Panc1 (cell line): ENCODE measurements at regions of chr2 and their contacts with region 1.

Region 1: DNA sequence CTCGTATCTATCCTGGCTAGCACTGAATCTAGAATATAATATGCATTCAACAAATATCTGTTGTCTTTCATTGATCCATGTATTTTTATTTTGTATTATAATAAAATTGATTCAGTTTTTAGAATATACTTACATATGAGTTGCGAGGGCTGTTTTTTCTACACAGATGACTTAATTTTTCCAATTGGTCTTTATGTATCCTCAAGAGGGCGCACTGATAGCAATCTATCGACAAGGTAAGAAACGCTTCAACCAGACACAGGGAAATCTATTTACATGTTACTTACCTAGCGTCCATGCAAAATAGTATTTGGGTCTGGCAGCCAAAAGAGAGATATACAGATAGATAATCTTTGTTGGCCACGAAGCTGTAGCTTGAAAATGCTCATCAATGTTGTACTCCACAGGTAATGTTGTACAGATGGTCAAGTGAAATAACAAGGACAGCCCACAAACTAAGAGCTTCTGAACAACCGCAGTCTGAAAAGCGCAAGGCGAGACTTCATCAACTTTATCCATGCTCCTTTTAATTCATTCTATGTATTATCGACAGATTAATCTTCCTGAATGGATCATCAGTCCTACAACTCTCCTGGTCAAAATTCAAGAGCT is 35.5 kb upstream of the KIDINS220 start:
- DNase-seq: peak; percentile 43
- ATAC-seq: peak; percentile 69
- H3K4me3 ChIP-seq: no peak overlapping the region
- H3K27ac ChIP-seq: no peak overlapping the region
- H3K4me1 ChIP-seq: no peaks in the 10 kb centered on the region
- H3K27me3 ChIP-seq: no peaks in the 10 kb centered on the region
- CTCF ChIP-seq: peak; percentile 75

Region 2: DNA sequence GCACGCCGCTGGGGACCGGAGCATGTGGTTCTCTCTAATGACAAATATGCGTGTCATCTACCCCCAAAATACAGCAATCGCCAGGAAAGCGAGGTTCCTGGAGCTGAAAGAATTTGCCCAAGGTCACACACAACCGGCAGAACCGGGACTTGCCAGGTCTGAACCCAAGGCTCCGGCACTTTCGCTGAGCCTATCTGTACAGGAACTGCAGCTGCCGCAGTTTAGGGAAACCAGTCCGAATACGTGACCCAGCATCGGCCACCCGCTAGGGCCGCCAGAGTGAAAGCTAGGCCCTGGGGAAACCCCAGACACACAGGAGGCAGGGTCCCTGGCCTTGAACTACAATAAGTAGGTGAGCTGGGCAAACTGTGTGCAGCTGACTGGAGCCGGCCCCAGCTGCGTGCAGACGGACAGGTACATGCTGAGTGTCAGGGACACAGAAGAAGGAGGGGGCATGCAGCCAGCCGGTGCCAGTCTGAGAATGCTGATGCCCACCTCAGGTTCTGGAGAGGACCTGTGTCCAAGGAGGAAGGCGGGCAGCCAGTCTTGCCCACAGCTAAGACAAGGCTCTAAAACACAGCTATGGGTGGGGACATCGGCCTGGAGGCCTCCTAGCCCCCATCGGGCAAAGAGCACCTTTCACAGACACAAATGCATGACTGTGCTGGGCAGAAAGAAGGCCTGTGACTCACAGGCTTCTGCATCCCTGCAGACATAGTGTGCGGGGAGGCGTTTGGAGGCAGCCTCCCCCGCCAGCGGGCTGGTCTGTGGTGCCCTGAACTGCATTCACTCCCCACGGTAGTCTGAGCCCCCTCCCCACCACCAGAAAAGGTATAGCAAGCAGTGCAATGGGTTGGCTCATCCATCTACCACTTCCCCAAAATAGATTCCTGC is 298.5 kb before region 1 on chr2:
- CTCF ChIA-PET with region 1: no interaction called
- POLR2A ChIA-PET with region 1: no interaction called
- in situ Hi-C with region 1: no loop called
- intact Hi-C with region 1: no loop called
- DNase-seq: no peak
- ATAC-seq: 0 out of 2 replicates have a peak, but pooled peaks have one; percentile 28
- H3K4me3 ChIP-seq: no peak overlapping the region
- H3K27ac ChIP-seq: no peak overlapping the region
- H3K4me1 ChIP-seq: no peaks in the 10 kb centered on the region
- H3K27me3 ChIP-seq: no peaks in the 10 kb centered on the region
- CTCF ChIP-seq: no peak

Region 3: GRCh38 chr2:8939486-8940114 is 66.7 kb after region 1 on chr2:
- CTCF ChIA-PET with region 1: interaction called, 10 read pairs
- POLR2A ChIA-PET with region 1: no interaction called
- in situ Hi-C with region 1: no loop called
- intact Hi-C with region 1: no loop called
- DNase-seq: no peak
- ATAC-seq: no peak
- H3K4me3 ChIP-seq: no peak overlapping the region
- H3K27ac ChIP-seq: no peak overlapping the region
- H3K4me1 ChIP-seq: no peaks in the 10 kb centered on the region
- H3K27me3 ChIP-seq: no peaks in the 10 kb centered on the region
- CTCF ChIP-seq: no peak

Region 4: DNA sequence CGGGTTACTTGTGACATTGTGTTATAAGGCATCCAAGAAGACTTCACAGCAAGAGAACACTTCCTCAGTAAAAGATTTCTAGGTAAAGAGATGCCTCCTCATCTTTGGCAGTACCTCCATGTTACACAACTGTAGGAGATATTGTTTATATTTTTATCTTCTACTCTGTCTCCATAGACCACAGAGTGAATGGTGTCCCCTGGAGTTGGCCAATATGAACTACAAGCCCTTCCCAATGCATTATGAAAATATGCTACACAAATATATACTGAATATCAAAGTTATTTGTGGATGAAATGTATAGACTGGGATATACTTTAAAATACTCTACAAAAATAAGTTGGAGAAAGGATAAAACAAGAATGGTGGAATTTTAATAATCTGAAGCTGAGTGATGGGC is 83.8 kb after region 1 on chr2:
- CTCF ChIA-PET with region 1: no interaction called
- POLR2A ChIA-PET with region 1: no interaction called
- in situ Hi-C with region 1: no loop called
- intact Hi-C with region 1: no loop called
- DNase-seq: no peak
- ATAC-seq: no peak
- H3K4me3 ChIP-seq: no peak overlapping the region
- H3K27ac ChIP-seq: no peak overlapping the region
- H3K4me1 ChIP-seq: no peaks in the 10 kb centered on the region
- H3K27me3 ChIP-seq: no peaks in the 10 kb centered on the region
- CTCF ChIP-seq: no peak; the same call in 1 of the 2 replicates

Region 5: GRCh38 chr2:8993196-8993901 is 120.4 kb after region 1 on chr2:
- CTCF ChIA-PET with region 1: no interaction called
- POLR2A ChIA-PET with region 1: no interaction called
- in situ Hi-C with region 1: no loop called
- intact Hi-C with region 1: loop called (anchors 5 kb)
- DNase-seq: no peak
- ATAC-seq: peak; percentile 61
- H3K4me3 ChIP-seq: no peak overlapping the region
- H3K27ac ChIP-seq: no peak overlapping the region
- H3K4me1 ChIP-seq: peaks cover 17% of the 10 kb centered on the region
- H3K27me3 ChIP-seq: no peaks in the 10 kb centered on the region
- CTCF ChIP-seq: no peak